Dorsolateral prefrontal cortex (tissue), 120 donors: ENCODE measurements at regions of chr1 and their contacts with region 1.

Region 1: GRCh38 chr1:41416552-41417334 is 55.5 kb downstream of the FOXO6 start:
- DNase-seq: peak in 9 of 10 donors; percentile 49 to 78 (median 60)
- H3K4me3 ChIP-seq: no peak overlapping the region
- H3K27ac ChIP-seq: no peak overlapping the region
- H3K27me3 ChIP-seq: no peaks in the 10 kb centered on the region
- CTCF ChIP-seq: peak; percentile 74 to 98 (median 94)

Region 2: GRCh38 chr1:41268154-41268770 is 148.5 kb before region 1 on chr1:
- intact Hi-C with region 1: loop called (anchors 1 to 2 kb)
- DNase-seq: peak; percentile 67 to 89 (median 80)
- H3K4me3 ChIP-seq: peak overlapping the region in 1 of 59 donors; percentile 17
- H3K27ac ChIP-seq: peak overlapping the region in 17 of 59 donors; percentile 3 to 60 (median 21)
- H3K27me3 ChIP-seq: no peaks in the 10 kb centered on the region
- CTCF ChIP-seq: peak; percentile 95 to 100 (median 99)

Region 3: GRCh38 chr1:41282679-41283317 is 133.9 kb before region 1 on chr1:
- intact Hi-C with region 1: loop called (anchors 5 kb)
- DNase-seq: peak in 7 of 10 donors; percentile 20 to 64 (median 37)
- H3K4me3 ChIP-seq: no peak overlapping the region
- H3K27ac ChIP-seq: no peak overlapping the region
- H3K27me3 ChIP-seq: peaks cover 0 to 11% (median 0%) of the 10 kb centered on the region in 45 donors
- CTCF ChIP-seq: peak; percentile 29 to 85 (median 73)

Region 4: GRCh38 chr1:41322835-41323627 is 93.7 kb before region 1 on chr1:
- intact Hi-C with region 1: loop called (anchors 2 to 5 kb)
- DNase-seq: peak in 8 of 10 donors; percentile 26 to 66 (median 48)
- H3K4me3 ChIP-seq: no peak overlapping the region
- H3K27ac ChIP-seq: no peak overlapping the region
- H3K27me3 ChIP-seq: no peaks in the 10 kb centered on the region
- CTCF ChIP-seq: peak in 51 of 56 donors; percentile 15 to 73 (median 50)

Region 5: DNA sequence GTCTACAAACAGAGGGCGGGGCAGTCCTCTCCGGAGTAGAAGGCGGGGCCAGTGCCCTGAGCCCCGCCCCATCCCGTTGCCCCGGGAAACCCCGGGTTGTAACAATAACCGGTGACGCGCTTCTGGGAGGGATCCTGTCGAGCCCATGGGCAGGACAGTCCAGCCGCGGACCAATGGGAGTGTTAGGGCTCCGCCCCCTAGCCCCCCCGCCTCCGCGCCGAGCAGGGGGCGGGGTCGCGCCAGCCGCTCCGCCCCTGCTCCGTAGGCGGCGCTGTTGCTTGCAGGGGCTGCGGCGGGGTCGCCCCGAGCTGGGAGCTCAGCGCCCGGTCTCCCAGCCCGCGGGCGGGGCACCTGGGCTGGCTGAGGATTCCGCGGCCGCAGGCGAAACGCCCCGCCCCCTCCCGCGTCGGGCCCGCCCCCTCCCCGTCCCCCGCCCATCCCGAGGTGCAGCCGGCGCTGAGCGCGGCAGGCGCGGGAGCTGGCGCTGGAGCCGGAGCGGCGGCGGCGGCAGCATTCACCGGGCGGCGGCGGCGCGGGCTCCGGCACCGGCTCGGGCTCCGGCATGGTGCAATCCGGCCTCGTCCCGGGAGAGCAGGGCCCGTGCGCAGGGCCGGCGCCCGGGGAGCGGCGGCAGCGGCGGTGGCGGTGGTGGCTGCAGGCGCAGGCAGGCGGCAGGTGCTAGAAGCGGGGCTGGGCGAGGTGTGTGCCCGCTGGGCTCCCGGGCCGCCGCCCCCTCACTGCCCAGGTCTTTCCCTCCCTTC is 55.6 kb before region 1 on chr1 and contains the start of gene FOXO6:
- intact Hi-C with region 1: loop called (anchors 2 to 5 kb)
- DNase-seq: peak; percentile 96 to 99 (median 99)
- H3K4me3 ChIP-seq: peak within 1 kb of the TSS; percentile 54 to 85 (median 72)
- H3K27ac ChIP-seq: peak within 1 kb of the TSS in 45 of 59 donors; percentile 5 to 83 (median 66)
- H3K27me3 ChIP-seq: peaks cover 0 to 3% (median 0%) of the 10 kb centered on the region in 45 donors
- CTCF ChIP-seq: peak; percentile 23 to 89 (median 68)
- total RNA-seq, gene FOXO6: 1.7 to 8.3 (median 3.8) TPM